ENCODE measurements at regions of chr16 and their contacts with region 1.

Region 1: DNA sequence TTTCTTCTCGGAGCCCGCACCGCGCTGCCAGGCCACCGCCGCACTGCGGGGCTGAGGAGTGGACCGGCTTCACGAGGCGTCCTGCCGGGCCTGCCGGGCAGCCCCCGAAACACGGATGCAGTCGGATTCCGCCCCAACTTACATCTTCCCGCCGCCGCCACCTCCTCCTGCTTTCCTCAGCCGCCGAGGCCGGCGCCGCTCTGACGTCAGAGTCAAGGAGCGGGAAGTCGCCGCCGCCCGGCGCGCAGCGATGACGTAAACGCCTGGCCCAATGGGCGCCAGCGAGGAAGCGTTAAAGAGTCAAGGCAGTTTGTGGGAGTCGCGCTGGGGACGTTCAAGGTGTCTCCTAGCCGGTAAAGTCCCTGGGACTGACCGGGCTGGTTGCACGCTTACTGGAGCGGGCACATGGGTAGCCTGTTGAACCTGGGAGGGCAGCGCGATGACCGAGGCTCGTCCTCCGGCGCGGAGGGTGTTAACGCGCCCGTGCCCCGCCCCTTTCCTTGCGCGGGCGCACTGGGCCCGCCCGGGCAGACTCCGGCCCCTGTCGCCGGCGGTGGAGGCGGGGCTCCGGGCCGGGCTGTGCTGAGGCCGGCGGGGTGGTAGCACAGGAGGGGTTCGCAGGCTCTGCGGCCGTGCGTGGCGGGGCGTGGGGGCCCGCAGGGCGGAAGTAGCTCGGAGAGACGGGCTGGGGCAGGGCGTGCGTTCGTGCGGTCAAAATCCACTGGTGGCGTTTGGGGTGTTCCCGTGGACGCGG is at the start of gene RNPS1:
- DNase-seq: peak; percentile 98
- ATAC-seq: peak; percentile 86
- H3K4me3 Mint-ChIP-seq: peak within 1 kb of the TSS; percentile 92
- H3K27ac Mint-ChIP-seq: peak within 1 kb of the TSS; percentile 96
- H3K4me1 Mint-ChIP-seq: peaks cover 34% of the 10 kb centered on the region
- H3K27me3 Mint-ChIP-seq: no peaks in the 10 kb centered on the region
- total RNA-seq, gene RNPS1: 327 to 445 TPM

Region 2: DNA sequence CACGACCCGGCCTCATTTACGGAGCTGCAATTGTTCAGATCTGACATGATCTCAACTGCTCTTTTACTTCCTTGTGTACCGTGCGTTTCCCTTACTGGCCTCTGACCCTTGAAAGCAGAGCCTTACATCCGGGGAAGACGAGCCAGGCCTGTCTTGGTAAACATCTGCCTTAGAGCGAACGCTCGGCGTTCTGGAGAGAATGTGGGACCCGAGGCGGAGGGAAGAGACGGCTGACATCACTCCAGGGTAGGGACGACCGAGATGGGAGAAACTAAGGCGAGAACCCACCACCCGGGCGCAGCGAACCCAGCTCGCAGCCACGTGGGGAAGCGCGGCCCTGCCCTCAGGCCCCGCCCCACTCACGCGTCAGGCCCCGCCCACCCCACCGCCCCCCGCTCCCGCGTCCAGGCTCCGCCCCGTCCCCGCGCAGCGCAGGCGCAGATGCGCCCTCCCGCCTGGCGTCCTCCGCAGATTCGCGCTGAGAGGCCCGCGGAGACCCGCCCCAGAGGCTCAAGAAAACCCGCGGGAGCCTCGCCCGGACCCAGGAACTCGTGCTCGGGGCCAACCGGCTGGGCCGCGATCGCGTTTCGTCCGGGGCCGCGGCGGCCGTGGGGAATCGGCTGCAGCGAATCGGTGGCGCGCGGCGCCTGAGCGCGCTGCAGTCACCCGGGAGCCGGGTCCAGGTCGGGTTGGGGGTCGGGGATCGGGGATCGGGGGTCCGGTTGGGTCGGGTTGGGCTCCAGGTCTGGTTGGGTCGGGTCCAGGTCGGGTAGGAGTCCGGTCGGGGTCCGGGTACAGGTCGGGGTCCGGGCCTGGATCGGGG is 775.0 kb before region 1 on chr16 and contains the start of gene TELO2:
- CTCF ChIA-PET with region 1: no interaction called
- POLR2A ChIA-PET with region 1: no interaction called
- intact Hi-C with region 1: loop called in 1 of 2 experiments (anchors 5 kb)
- DNase-seq: peak; percentile 94
- ATAC-seq: peak; percentile 89
- H3K4me3 Mint-ChIP-seq: peak within 1 kb of the TSS; percentile 92
- H3K27ac Mint-ChIP-seq: peak within 1 kb of the TSS; percentile 97
- H3K4me1 Mint-ChIP-seq: peaks cover 15% of the 10 kb centered on the region
- H3K27me3 Mint-ChIP-seq: no peaks in the 10 kb centered on the region
- total RNA-seq, gene TELO2: 48.1 to 60.0 TPM

Region 3: DNA sequence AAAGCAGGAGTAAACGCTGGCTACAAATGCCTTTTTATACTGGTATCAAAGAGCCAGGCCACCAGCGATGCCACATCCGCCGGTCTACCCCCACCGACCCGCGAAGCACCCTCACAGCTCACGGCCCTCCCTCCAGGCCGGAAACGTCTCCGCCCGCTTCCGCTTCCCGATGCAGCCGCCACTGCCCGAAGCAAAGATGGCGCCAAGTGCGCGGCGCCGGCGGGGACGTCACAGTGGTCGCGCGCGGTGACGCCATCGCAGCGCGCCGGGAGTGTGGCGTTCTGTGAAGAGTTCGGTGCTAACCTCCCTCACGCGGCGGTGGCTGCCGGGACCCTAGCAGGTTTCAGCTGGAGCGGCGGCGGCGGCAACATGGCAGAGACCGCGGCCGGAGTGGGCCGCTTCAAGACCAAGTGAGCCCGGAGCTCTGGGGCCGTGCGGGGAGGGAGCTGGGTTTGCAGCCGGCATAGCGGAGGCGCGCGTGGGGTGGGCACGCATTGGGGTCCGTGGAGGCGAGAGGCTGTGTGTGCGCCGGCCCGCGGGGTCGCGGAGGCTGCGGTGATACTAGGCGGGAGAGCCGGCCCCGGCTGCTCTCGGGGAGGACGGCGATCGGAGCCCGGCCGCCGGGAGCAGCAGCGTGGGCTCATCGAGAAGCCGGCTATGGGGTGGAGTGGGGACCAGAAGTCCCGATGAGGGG is 296.1 kb before region 1 on chr16 and contains the start of gene TBL3:
- CTCF ChIA-PET with region 1: no interaction called
- POLR2A ChIA-PET with region 1: no interaction called
- intact Hi-C with region 1: loop called in 1 of 2 experiments (anchors 5 kb)
- DNase-seq: peak; percentile 98
- ATAC-seq: peak; percentile 97
- H3K4me3 Mint-ChIP-seq: peak within 1 kb of the TSS; percentile 99
- H3K27ac Mint-ChIP-seq: peak within 1 kb of the TSS; percentile 99
- H3K4me1 Mint-ChIP-seq: peaks cover 16% of the 10 kb centered on the region
- H3K27me3 Mint-ChIP-seq: no peaks in the 10 kb centered on the region
- total RNA-seq, gene TBL3: 47.4 to 48.6 TPM

Region 4: GRCh38 chr16:2205104-2205966 is 62.8 kb before region 1 on chr16 and contains the start of gene MLST8:
- CTCF ChIA-PET with region 1: no interaction called
- POLR2A ChIA-PET with region 1: no interaction called
- intact Hi-C with region 1: loop called (anchors 1 to 5 kb)
- DNase-seq: peak; percentile 92
- ATAC-seq: peak; percentile 84
- H3K4me3 Mint-ChIP-seq: peak within 1 kb of the TSS; percentile 83
- H3K27ac Mint-ChIP-seq: peak within 1 kb of the TSS; percentile 84
- H3K4me1 Mint-ChIP-seq: peaks cover 16% of the 10 kb centered on the region
- H3K27me3 Mint-ChIP-seq: no peaks in the 10 kb centered on the region
- total RNA-seq, gene MLST8: 61.3 to 76.1 TPM

Region 5: GRCh38 chr16:2429034-2429770 is 161.1 kb after region 1 on chr16 and contains the start of gene CCNF:
- CTCF ChIA-PET with region 1: interaction called, 5 read pairs
- POLR2A ChIA-PET with region 1: no interaction called
- intact Hi-C with region 1: loop called in 1 of 2 experiments (anchors 1 kb)
- DNase-seq: peak; percentile 99
- ATAC-seq: peak; percentile 97
- H3K4me3 Mint-ChIP-seq: peak within 1 kb of the TSS; percentile 97
- H3K27ac Mint-ChIP-seq: peak within 1 kb of the TSS; percentile 76
- H3K4me1 Mint-ChIP-seq: peaks cover 16% of the 10 kb centered on the region
- H3K27me3 Mint-ChIP-seq: no peaks in the 10 kb centered on the region
- total RNA-seq, gene CCNF: 52.2 to 53.4 TPM

Region 6: DNA sequence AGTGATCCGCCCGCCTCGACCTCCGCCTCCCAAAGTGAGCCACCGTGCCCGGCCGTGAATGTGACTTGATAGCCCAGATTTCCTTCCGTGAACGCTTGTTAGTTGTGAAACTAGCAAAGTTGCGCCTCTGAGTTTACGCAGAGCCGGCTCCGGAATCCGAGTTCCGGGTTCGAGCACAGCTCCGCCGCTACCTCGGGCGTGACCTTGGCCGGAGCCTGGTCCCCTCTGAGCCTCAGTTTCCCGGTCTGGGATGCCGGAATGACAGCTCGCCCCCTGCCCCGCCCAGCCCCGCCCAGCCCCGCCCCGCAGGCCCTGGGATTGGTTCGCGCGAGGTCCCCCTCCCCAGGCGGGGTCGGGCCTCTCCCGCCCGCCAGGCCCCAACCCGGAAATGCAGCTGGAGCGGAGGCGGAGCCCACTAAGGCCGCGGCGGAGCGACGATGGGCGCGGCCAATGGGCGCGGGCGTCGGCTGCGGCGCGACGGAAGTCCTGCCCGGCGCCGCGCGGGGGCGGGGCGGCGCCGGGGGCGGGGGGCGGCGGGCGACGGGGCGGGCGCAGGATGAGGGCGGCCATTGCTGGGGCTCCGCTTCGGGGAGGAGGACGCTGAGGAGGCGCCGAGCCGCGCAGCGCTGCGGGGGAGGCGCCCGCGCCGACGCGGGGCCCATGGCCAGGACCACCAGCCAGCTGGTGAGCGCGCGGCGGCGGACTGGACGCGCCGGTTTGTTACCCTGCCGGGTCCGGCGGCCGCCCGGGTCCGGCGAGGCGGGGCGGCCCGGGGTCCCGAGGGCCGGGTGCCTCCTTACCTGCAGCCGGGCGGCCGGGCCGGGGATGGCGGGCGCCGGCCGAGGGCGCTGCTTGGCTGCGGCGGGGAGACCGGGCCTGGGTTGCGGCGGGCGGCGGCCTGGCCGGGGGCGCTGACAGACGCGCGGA is 269.6 kb after region 1 on chr16 and contains the start of gene PDPK1:
- CTCF ChIA-PET with region 1: no interaction called
- POLR2A ChIA-PET with region 1: no interaction called
- intact Hi-C with region 1: loop called in 1 of 2 experiments (anchors 1 kb)
- DNase-seq: peak; percentile 97
- ATAC-seq: peak; percentile 93
- H3K4me3 Mint-ChIP-seq: peak within 1 kb of the TSS; percentile 83
- H3K27ac Mint-ChIP-seq: peak within 1 kb of the TSS; percentile 90
- H3K4me1 Mint-ChIP-seq: peaks cover 38% of the 10 kb centered on the region
- H3K27me3 Mint-ChIP-seq: no peaks in the 10 kb centered on the region
- total RNA-seq, gene PDPK1: 30.4 to 34.5 TPM

Region 7: GRCh38 chr16:3023669-3024478 is 755.8 kb after region 1 on chr16 and contains the starts of genes HCFC1R1 and THOC6:
- CTCF ChIA-PET with region 1: no interaction called
- POLR2A ChIA-PET with region 1: no interaction called
- intact Hi-C with region 1: loop called in 1 of 2 experiments (anchors 5 kb)
- DNase-seq: peak; percentile 99
- ATAC-seq: peak; percentile 74
- H3K4me3 Mint-ChIP-seq: peak within 1 kb of the TSS; percentile 74
- H3K27ac Mint-ChIP-seq: peak within 1 kb of the TSS; percentile 97
- H3K4me1 Mint-ChIP-seq: peaks cover 50% of the 10 kb centered on the region
- H3K27me3 Mint-ChIP-seq: peaks cover 4% of the 10 kb centered on the region
- total RNA-seq, gene HCFC1R1: 30.0 to 30.7 TPM
- total RNA-seq, gene THOC6: 46.9 to 50.2 TPM